ENCODE measurements at regions of chr20 and their contacts with region 1.

Region 1: GRCh38 chr20:19784511-19785172 is 26.6 kb downstream of the RIN2 start:
- DNase-seq: peak; percentile 72
- H3K4me3 ChIP-seq: no peak overlapping the region
- H3K27ac ChIP-seq: peak overlapping the region in 1 of 2 donors; percentile 19
- H3K4me1 ChIP-seq: peaks cover 10% of the 10 kb centered on the region
- H3K27me3 ChIP-seq: no peaks in the 10 kb centered on the region
- CTCF ChIP-seq: peak; percentile 72 to 83 (median 79)
- POLR2A ChIP-seq: no peak

Region 2: DNA sequence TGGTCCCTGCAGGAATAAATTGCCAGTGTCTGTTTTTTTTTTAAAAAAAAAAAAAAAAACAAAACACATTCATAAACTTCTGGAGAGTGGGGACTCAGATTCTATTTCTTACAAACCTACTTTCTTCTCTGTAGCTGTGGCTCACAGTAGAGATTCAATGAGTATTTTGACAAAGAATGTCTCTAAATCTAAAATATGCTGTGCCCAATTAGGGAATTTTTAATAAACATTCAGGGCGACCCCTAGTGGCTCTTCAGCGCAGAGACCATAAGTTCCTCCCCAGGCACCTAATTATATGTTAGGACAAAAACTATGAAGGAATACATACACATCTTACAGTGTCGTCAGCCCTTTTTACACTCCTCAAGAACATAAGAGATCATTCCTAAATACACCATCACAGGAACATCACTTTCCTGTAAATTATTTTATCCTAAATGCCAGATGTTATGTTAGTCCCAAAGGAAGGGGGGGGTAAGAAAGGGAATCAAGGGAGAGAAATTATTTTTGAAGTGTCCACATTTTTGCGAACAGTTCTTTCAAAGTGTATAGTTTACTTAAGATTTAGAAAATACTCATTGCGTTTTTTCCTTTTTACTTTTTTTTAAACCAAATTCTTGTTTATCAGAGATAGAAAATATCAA is 210.7 kb after region 1 on chr20:
- intact Hi-C with region 1: loop called (anchors 10 kb)
- DNase-seq: peak; percentile 56
- H3K4me3 ChIP-seq: no peak overlapping the region
- H3K27ac ChIP-seq: no peak overlapping the region
- H3K4me1 ChIP-seq: peaks cover 33% of the 10 kb centered on the region
- H3K27me3 ChIP-seq: no peaks in the 10 kb centered on the region
- CTCF ChIP-seq: peak; percentile 79 to 85 (median 83)
- POLR2A ChIP-seq: no peak

Measured in testis (tissue), 5 donors.